ENCODE measurements at regions of chr15 and their contacts with region 1.

Region 1: DNA sequence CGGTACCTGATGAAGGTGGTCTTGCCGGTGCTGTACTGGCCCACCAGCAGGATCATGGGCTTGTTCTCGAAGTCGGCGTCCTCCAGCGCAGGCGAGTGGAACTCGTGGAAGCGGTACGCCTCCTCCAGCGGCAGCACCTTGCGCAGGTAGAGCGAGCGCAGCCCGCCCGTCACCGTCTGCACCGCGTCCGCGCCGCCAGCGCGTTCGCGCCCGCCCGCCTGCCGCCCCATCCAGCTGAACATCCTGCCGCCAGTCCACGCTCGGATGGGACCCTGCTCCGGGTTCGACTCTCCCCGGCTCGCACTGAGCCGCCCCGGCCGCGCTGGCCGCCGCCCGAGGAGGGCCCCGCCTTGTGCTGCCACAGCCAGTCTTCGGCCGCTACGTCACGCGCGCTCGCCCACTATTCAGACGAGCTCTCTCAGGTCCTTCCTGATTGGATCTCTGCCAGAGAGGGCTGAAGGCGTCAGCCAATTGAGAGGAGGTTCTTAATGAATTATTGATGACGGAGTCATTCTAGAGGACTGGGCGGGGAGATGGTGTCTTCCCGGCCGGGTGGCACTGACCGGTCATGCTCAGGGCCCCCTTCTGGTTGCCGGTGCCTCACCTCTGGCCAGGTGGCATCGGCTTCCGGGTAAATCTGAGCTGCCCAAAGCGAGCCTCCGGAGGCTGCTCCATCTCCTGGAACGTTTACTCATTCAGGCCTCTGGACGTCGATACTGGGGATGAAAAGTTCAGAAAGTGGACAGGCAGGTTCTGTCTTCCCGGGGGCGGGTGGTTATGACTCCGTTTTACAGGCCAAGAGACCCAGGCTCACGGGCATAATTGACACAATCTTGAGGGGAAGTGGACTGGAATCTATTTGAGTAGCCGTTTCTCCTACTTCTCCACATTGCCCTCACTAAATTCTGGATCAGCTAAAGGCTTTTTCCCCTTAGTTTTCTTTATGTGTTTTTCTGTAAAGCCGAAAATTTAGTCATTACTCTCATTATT is at the start of gene EHD4:
- DNase-seq: peak; percentile 97
- H3K4me3 Mint-ChIP-seq: peak within 1 kb of the TSS; percentile 88
- H3K27ac Mint-ChIP-seq: peak within 1 kb of the TSS; percentile 93
- H3K4me1 Mint-ChIP-seq: peaks cover 42% of the 10 kb centered on the region
- H3K27me3 Mint-ChIP-seq: peaks cover 8% of the 10 kb centered on the region
- total RNA-seq, gene EHD4: 30.1 to 31.8 TPM

Region 2: DNA sequence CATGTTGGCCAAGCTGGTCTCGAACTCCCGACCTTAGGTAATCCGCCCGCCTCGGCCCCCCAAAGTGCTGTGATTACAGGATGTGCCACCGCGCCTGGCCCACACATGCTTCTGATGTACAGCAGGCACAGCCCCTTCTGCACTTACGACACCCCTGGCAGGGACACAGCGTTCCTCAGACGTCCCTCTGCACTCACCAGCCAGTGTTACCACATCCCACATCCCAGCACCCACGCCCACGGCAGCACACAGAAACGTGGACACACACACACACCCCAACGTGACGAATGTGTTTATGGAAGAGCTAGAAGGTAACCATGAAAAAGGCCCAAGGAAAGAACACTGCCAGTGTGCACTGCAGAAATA is 427.9 kb before region 1 on chr15:
- CTCF ChIA-PET with region 1: no interaction called
- intact Hi-C with region 1: loop called (anchors 2 kb)
- DNase-seq: no peak
- H3K4me3 Mint-ChIP-seq: peak overlapping the region; percentile 95
- H3K27ac Mint-ChIP-seq: peak overlapping the region; percentile 71
- H3K4me1 Mint-ChIP-seq: peaks cover 13% of the 10 kb centered on the region
- H3K27me3 Mint-ChIP-seq: no peaks in the 10 kb centered on the region

Region 3: GRCh38 chr15:41827880-41828806 is 144.4 kb before region 1 on chr15 and contains the start of gene JMJD7:
- CTCF ChIA-PET with region 1: no interaction called
- intact Hi-C with region 1: loop called (anchors 1 kb)
- DNase-seq: peak; percentile 97
- H3K4me3 Mint-ChIP-seq: peak within 1 kb of the TSS; percentile 82
- H3K27ac Mint-ChIP-seq: peak within 1 kb of the TSS; percentile 59
- H3K4me1 Mint-ChIP-seq: peaks cover 42% of the 10 kb centered on the region
- H3K27me3 Mint-ChIP-seq: no peaks in the 10 kb centered on the region
- total RNA-seq, gene JMJD7: 18.7 to 19.8 TPM

Region 4: DNA sequence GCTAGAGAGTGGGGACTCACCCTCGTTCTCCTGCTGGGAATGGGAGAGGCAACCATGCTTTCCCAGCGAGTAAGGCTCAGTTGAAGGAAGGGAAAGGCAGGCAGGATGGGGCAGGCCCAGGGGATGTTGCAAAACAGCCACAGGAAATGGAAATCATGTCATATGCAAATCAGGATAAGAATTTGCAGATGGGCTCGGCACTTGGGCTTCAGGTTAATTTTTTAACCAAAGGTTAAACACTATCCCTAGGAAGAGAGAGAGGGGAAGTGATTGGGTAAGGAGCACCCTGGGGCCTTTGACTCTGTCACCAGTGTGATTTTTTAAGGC is 62.9 kb after region 1 on chr15:
- CTCF ChIA-PET with region 1: no interaction called
- intact Hi-C with region 1: loop called (anchors 1 kb)
- DNase-seq: peak; percentile 73
- H3K4me3 Mint-ChIP-seq: peak overlapping the region; percentile 3
- H3K27ac Mint-ChIP-seq: peak overlapping the region; percentile 34
- H3K4me1 Mint-ChIP-seq: peaks cover 19% of the 10 kb centered on the region
- H3K27me3 Mint-ChIP-seq: no peaks in the 10 kb centered on the region

Region 5: DNA sequence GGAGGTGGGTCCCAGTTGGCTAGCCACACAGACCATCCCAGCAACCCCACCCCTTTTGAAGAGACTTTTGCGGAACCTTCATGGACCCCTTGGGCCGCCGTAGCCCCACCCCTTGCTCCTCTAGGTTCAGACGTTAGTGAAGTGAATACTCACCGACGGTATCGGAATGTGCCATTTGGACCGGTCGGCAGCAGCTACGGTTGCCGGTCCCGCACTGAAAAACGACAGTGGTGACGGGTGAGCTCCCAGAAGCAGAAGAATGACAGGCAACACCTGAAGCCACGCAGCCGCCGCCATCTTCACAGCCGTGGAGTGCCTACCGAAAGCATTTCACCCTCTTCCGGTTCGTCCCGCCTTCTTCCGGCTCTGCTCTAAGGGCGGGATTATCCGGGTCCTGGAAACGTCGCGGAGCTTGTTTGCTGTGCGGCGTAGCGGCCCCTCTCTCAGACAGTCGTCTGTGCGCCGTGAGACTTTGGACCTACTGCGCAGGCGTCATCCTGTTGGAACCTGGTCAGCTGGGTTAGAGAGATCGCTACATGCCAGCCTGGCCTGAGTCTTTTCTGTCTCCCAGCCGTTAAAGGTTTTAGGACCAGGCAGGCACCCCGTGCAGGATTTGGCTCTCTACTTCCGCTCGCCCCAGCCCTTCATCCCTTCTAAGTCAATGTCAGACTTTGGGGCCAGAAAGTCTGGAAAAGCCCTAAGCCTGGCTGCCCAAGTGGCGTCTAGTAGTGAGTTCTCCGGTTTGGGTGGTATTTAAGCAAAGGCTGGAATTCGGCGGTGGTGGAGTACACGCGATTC is 300.8 kb after region 1 on chr15 and contains the starts of genes GANC and TMEM87A:
- CTCF ChIA-PET with region 1: no interaction called
- intact Hi-C with region 1: loop called (anchors 2 kb)
- DNase-seq: peak; percentile 98
- H3K4me3 Mint-ChIP-seq: peak within 1 kb of the TSS; percentile 99
- H3K27ac Mint-ChIP-seq: peak within 1 kb of the TSS; percentile 99
- H3K4me1 Mint-ChIP-seq: peaks cover 45% of the 10 kb centered on the region
- H3K27me3 Mint-ChIP-seq: no peaks in the 10 kb centered on the region
- total RNA-seq, gene GANC: 27.4 to 27.7 TPM
- total RNA-seq, gene TMEM87A: 26.6 to 28.4 TPM

Region 6: GRCh38 chr15:43029476-43029875 is 1056.9 kb after region 1 on chr15:
- CTCF ChIA-PET with region 1: no interaction called
- intact Hi-C with region 1: no loop called
- DNase-seq: no peak
- H3K4me3 Mint-ChIP-seq: no peak overlapping the region
- H3K27ac Mint-ChIP-seq: no peak overlapping the region
- H3K4me1 Mint-ChIP-seq: no peaks in the 10 kb centered on the region
- H3K27me3 Mint-ChIP-seq: no peaks in the 10 kb centered on the region